Right ventricle myocardium inferior (tissue), 1 donor: ENCODE measurements at regions of chr6 and their contacts with region 1.

Region 1: DNA sequence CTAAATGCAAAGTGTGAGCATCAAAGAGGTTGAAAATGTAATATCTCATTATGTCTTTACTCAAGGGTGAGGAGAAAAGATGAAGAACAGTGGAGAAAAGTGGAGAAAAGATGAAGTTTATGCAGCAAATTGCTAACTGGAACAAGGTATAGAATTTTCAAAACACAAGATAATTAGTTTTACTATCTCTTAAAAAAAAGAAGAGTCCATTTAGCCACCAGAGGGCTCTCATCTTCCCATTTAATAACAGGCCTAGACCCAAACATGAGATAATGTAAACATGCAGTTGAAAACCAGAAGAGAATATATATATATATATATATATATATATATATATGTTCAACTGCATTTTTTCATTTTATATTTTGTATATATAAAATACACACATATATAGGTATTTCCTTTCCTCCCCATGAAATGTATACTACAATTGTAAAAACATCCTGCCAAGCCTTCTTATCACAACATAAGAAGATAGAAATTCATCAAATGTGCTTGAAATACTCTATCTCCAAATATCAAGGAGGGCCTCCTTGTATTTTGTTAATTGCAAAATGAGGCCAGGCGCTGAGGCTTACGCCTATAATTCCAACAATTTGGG is 78.4 kb downstream of the ADTRP start:
- DNase-seq: no peak
- ATAC-seq: no peak

Region 2: GRCh38 chr6:11525468-11526155 is 174.6 kb before region 1 on chr6:
- intact Hi-C with region 1: no loop called
- DNase-seq: no peak
- ATAC-seq: peak; percentile 82

Region 3: GRCh38 chr6:11653028-11653583 is 47.1 kb before region 1 on chr6:
- intact Hi-C with region 1: no loop called
- DNase-seq: no peak
- ATAC-seq: no peak

Region 4: DNA sequence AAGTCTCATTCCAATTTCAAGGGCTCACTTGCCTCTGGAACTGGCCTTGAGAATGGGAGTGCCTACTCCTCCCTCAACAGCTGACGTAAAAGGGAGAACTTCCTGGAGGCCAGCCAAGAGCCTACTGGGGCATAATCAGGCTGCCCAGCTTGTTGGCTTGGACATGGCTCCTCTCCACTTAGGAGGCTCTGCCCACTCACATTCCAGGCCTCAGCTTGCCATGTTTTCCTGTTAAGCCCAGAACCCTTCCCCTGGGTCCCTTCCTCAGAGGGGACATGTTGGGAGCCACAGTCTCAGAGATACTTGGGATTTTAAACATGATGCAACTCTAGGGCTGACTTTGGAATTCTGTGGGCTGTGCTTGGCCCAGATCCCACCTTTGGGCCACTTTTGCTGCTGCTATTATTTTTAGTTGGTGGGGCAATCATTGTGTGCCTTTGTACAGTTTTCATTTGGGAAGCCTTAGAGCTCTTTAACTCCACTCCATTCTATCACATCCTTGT is 109.9 kb after region 1 on chr6:
- intact Hi-C with region 1: loop called (anchors 5 kb)
- DNase-seq: peak; percentile 73
- ATAC-seq: peak; percentile 92

Region 5: DNA sequence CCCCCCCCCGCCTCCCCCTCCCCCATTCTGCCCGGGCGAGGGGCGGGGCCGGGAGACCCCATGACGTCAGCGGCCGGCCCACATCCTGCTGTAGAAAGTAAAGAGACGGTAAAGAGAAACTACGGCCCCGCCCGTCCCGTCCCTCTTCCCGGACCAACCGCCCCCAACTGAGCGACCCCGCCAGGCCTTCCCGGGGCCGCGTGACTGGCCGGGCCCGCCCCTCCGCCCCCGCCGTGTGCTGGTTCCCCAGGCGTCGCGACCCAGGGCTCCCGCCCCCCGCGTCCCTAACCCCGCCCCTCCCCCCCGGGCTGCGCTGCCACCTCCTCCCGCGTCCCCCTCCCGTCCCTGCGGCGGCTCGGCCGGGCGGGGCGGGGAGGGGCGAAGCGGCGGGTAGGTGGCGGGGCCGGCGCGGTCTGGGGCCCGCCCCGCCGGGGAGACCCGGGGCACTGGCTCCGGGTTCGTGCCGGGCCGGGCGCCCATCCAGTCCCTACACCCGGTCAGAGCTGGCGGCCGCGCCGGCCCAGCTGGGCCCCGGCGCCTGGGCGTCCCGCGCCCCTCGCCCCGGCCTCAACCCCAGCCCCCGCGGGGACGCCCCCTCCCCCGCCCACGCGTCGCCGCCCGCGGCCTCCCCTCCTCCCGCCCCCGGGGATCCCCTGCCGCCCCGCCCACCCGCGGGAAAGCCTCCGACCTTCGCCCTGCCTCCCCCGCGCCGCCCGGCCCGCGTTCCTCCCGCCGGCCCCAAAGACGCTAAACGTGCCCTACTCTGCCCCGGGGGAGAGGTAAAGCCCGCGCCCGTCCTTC is 311.3 kb after region 1 on chr6:
- intact Hi-C with region 1: loop called (anchors 10 kb)
- DNase-seq: peak; percentile 99
- ATAC-seq: peak; percentile 96

Region 6: DNA sequence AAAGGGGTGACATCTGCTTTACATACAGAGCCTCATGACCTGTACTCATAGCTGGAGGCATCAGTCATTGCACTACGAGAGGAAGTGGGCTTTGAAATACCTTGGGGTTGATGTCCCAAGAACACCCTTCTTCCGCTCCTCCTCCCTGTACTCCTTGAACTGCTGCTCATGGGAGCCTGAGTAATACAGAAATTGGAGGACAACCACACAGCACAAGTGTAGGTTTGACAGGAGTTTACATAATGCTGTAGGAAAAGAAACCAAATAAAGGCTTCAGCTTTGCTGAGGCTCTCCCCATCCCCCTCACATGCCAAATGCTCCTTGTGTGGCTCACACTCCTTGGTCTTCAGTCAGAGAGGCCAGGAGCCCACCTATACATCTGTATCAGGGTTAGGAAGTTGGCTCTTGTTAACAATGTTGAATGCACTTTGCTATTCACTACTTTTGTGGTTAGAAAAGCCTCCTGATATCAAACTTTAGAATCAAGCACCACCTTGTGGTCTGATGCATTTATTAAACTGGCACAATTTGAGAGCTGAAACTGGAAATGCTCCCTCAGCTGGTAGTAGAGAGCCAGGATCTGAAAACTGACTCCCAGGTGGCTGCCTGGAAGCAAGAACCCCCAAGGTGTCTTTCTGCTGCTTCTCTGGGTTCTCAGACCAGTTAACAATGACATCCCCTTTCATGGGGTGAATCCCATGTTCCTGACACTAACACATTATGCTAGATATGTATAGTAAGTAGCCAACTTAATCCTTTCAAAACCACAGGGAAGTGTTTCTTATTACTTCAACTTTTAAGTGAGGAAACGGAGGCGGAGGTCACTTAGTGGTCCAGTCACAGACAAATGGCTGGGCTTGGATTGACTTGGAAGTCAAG is 533.7 kb after region 1 on chr6:
- intact Hi-C with region 1: loop called (anchors 10 kb)
- DNase-seq: no peak
- ATAC-seq: peak; percentile 76